T-cell (primary cell): ENCODE measurements at regions of chr7 and their contacts with region 1.

Region 1: DNA sequence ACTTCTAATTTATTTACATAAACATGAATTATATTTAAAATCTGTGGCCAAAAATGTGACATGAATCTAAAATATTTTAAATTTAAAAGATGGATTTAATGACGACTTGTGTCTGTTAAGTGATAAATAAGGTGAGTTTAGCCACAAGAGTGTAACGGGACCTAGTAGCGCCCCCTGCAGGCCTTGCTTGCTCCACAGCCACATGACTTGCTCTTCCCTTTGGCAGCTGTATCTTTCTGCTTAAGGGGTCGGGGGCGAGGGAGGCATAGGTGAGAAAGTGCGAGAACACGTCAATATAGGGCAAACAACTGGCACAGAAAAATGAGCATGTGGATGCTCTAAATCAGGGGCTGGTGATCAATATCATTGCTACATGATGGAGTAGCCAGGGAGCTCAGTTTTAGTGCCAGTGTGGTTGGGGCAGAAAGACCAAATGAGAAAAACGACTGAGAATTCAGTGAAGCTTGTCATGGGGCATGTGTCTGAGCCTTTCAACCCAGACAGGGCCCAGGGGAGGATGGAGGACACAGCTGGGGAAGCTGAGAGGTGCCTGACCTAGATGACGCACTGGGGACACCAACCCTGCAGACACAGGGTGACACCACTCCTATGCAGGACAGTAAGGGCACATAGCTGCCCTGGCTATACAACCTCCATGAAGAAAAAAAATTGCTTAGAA is 49.8 kb downstream of the PAXIP1 start:
- DNase-seq: peak; percentile 13 to 83 (median 61)
- ATAC-seq: peak in 2 of 4 experiments; percentile 59 to 61
- H3K4me3 ChIP-seq: no peak overlapping the region
- H3K4me3 Mint-ChIP-seq: no peak overlapping the region
- H3K27ac ChIP-seq: no peak overlapping the region
- H3K27ac Mint-ChIP-seq: no peak overlapping the region
- H3K4me1 ChIP-seq: no peaks in the 10 kb centered on the region
- H3K4me1 Mint-ChIP-seq: no peaks in the 10 kb centered on the region
- H3K27me3 ChIP-seq: no peaks in the 10 kb centered on the region
- H3K27me3 Mint-ChIP-seq: no peaks in the 10 kb centered on the region

Region 2: GRCh38 chr7:154913638-154914312 is 39.4 kb before region 1 on chr7:
- CTCF ChIA-PET with region 1: interaction called, 5 to 11 read pairs
- POLR2A ChIA-PET with region 1: interaction called in 1 of 2 experiments, 3 read pairs
- DNase-seq: peak; percentile 62 to 92 (median 82)
- ATAC-seq: peak; percentile 89 to 97 (median 96)
- H3K4me3 ChIP-seq: peak overlapping the region; percentile 34 to 61
- H3K4me3 Mint-ChIP-seq: peak overlapping the region; percentile 80 to 89 (median 81)
- H3K27ac ChIP-seq: no peak overlapping the region
- H3K27ac Mint-ChIP-seq: no peak overlapping the region
- H3K4me1 ChIP-seq: peaks cover 0 to 15% of the 10 kb centered on the region in 2 experiments
- H3K4me1 Mint-ChIP-seq: peaks cover 3 to 6% (median 5%) of the 10 kb centered on the region in 3 donors
- H3K27me3 ChIP-seq: peaks cover 0 to 58% of the 10 kb centered on the region in 2 experiments
- H3K27me3 Mint-ChIP-seq: peaks cover 25 to 27% of the 10 kb centered on the region in 2 donors

Region 3: GRCh38 chr7:154978017-154978416 is 24.9 kb after region 1 on chr7:
- CTCF ChIA-PET with region 1: no interaction called
- POLR2A ChIA-PET with region 1: no interaction called
- DNase-seq: no peak
- ATAC-seq: no peak
- H3K4me3 ChIP-seq: no peak overlapping the region
- H3K4me3 Mint-ChIP-seq: no peak overlapping the region
- H3K27ac ChIP-seq: no peak overlapping the region
- H3K27ac Mint-ChIP-seq: no peak overlapping the region
- H3K4me1 ChIP-seq: no peaks in the 10 kb centered on the region
- H3K4me1 Mint-ChIP-seq: peaks cover 10 to 13% (median 11%) of the 10 kb centered on the region in 3 donors
- H3K27me3 ChIP-seq: no peaks in the 10 kb centered on the region
- H3K27me3 Mint-ChIP-seq: no peaks in the 10 kb centered on the region

Region 4: DNA sequence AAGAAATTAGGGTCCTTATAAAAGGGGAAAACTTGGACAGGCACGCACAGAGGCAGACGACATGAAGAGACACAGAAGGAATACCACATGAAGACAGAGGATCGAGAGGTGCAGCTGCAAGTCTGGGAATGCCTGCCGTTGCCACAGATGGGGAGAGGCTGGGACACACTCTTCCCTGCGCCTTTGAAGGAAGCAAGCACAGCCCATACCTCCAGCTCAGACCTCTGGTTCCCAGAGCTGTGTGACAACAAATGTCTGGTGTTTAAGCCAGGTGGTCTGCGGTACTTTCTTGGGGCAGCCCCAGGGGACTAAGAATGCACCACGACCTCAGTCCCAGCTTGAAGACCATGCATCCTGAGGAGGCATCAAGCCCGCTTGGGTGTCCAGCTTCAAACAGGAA is 362.8 kb after region 1 on chr7:
- CTCF ChIA-PET with region 1: interaction called in 1 of 2 experiments, 14 read pairs
- POLR2A ChIA-PET with region 1: interaction called in 1 of 2 experiments, 3 read pairs
- DNase-seq: no peak
- ATAC-seq: no peak
- H3K4me3 ChIP-seq: no peak overlapping the region
- H3K4me3 Mint-ChIP-seq: no peak overlapping the region
- H3K27ac ChIP-seq: no peak overlapping the region
- H3K27ac Mint-ChIP-seq: no peak overlapping the region
- H3K4me1 ChIP-seq: no peaks in the 10 kb centered on the region
- H3K4me1 Mint-ChIP-seq: no peaks in the 10 kb centered on the region
- H3K27me3 ChIP-seq: peaks cover 0 to 13% of the 10 kb centered on the region in 2 experiments
- H3K27me3 Mint-ChIP-seq: no peaks in the 10 kb centered on the region